ENCODE measurements at regions of chr2 and their contacts with region 1.

Region 1: DNA sequence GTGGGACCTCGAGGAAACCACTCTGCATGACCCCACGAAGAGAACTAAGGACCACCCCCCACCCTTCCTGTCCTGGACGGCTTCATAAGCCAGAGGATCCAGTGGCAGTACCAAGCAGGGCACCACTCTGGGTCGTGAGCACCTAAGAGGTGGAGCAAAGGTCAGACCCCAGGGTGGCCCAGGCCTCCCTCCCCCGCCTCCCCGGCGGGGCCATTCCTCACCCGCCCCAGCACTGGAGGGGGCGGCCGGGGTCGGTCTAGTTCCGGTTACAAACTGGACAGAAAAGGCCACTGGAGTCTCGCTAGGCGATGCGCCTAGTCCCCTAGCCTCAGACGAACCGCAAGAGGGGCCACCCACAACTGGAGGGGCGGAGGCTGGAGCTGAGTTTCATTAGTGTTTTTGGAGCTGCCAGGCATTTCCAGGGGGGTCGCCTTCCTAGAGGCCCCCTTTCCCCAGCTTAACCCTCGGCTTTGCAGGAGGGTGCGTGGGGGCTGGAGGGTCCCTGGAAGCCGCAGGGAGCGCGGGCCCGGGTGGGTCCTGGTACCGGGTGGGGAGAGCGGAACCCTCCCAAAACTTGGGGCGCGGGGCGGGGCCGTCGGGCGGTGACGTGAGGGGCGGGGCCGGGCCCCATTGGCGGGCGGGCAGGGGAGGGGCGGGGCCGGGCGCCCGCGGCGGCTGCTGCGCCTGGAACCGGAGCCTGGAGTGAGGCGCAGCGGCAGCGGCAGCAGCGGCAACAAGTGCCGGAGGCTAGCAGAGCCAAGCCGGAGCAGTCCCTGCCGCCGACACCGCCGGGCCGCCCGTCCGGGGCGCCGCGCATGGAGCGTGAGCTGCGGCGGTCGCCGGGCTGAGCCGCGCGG is at the start of gene B3GNT2:
- DNase-seq: peak; percentile 79 to 92 (median 84)
- ATAC-seq: peak; percentile 75
- H3K4me3 ChIP-seq: peak within 1 kb of the TSS; percentile 93 to 99
- H3K4me3 Mint-ChIP-seq: peak within 1 kb of the TSS; percentile 91
- H3K27ac ChIP-seq: peak within 1 kb of the TSS; percentile 86 to 90
- H3K27ac Mint-ChIP-seq: peak within 1 kb of the TSS; percentile 91
- H3K4me1 ChIP-seq: peaks cover 40% of the 10 kb centered on the region
- H3K4me1 Mint-ChIP-seq: peaks cover 32% of the 10 kb centered on the region
- H3K27me3 ChIP-seq: no peaks in the 10 kb centered on the region
- H3K27me3 Mint-ChIP-seq: no peaks in the 10 kb centered on the region
- CTCF ChIP-seq: no peak
- total RNA-seq, gene B3GNT2: 74.1 to 77.9 TPM

Region 2: DNA sequence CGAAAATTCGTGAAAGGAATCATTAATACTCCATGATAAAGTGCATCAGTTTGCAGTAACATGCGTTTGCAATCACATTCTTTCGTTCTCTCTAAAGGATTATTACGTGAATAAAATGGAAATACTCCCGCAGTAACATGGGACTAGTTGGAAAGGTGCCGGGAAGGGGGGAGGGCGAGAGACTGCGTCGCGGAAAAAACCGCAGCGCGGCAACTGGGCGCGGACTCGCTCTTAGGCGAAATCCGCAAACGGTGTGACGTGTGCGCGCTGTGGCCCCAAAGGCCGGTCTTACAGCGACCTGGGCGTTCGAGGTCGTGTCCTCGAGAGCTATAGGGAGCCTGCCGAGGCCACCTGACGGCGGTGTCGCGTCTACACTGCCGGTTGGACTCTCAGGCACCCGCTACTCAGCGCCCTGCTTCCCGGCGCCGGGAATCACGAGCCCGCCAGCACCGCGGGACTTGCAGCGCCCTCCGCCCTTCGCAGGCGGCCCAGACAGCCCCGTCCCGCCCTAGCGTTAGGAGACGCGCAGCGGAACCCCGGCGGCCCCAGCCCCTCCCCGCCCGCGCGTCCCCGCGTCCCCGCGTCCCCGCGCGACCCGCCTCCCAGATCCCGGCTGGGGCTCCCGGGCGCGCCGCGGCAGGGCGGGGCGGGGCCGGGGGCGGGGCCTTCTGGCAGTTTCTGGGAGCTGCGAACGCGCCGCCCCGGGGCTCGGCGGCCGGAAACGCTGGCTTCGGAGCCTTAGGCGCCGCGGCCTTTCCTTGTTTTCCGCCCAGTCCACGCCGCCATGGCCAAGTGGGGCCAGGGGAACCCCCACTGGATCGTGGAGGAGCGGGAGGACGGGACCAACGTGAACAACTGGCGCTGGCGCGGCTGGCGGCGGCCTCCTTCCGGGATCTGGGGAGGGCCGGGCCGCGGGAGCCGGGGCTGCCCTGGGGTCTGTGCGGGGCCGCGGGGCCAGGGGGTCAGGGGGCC is 1018.6 kb before region 1 on chr2:
- CTCF ChIA-PET with region 1: no interaction called
- POLR2A ChIA-PET with region 1: no interaction called
- intact Hi-C with region 1: loop called (anchors 10 kb)
- DNase-seq: peak; percentile 88 to 95 (median 94)
- ATAC-seq: peak; percentile 88
- H3K4me3 ChIP-seq: peak overlapping the region; percentile 74 to 87
- H3K4me3 Mint-ChIP-seq: peak overlapping the region; percentile 94
- H3K27ac ChIP-seq: peak overlapping the region; percentile 80 to 95
- H3K27ac Mint-ChIP-seq: peak overlapping the region; percentile 95
- H3K4me1 ChIP-seq: peaks cover 45% of the 10 kb centered on the region
- H3K4me1 Mint-ChIP-seq: peaks cover 52% of the 10 kb centered on the region
- H3K27me3 ChIP-seq: no peaks in the 10 kb centered on the region
- H3K27me3 Mint-ChIP-seq: no peaks in the 10 kb centered on the region
- CTCF ChIP-seq: no peak

Region 3: GRCh38 chr2:61764035-61764800 is 431.4 kb before region 1 on chr2:
- CTCF ChIA-PET with region 1: no interaction called
- POLR2A ChIA-PET with region 1: no interaction called
- intact Hi-C with region 1: loop called in 1 of 2 experiments (anchors 10 kb)
- DNase-seq: peak; percentile 91 to 99 (median 94)
- ATAC-seq: peak; percentile 97
- H3K4me3 ChIP-seq: peak overlapping the region; percentile 90 to 91
- H3K4me3 Mint-ChIP-seq: peak overlapping the region; percentile 96
- H3K27ac ChIP-seq: peak overlapping the region; percentile 99 to 100
- H3K27ac Mint-ChIP-seq: peak overlapping the region; percentile 98
- H3K4me1 ChIP-seq: no peaks in the 10 kb centered on the region
- H3K4me1 Mint-ChIP-seq: peaks cover 12% of the 10 kb centered on the region
- H3K27me3 ChIP-seq: no peaks in the 10 kb centered on the region
- H3K27me3 Mint-ChIP-seq: no peaks in the 10 kb centered on the region
- CTCF ChIP-seq: no peak

Region 4: DNA sequence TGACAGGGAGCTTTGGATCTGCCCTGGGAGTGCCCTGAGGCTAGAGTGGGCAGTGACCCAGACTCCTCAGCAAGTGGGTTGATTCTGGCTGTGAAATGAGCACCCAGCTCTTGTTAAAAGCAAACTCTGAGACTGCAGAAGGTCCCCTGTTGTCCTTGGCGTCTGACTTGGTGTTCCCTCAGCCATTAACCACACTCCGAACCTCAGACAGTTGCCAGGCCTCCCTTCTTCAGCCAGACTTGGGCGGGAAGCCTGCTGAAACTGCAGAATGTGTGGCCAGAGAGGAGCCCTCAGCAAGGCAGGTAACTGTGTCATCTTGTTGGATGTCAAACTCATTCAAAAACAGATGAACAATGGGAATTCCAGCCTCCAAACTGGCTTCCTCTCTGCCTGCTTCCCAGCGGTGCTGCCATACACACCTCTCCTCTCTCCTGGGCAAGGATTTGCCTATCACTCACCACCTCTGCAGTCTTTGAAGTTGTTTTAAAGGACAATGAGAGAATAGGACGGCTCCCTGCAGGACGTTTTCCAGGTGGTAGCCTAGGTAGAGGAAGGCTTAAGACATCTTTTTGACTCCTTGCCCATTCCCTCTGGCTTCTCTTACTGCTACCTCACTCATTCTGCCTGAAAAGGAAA is 38.7 kb before region 1 on chr2:
- CTCF ChIA-PET with region 1: no interaction called
- POLR2A ChIA-PET with region 1: no interaction called
- intact Hi-C with region 1: no loop called
- DNase-seq: no peak
- ATAC-seq: no peak
- H3K4me3 ChIP-seq: no peak overlapping the region
- H3K4me3 Mint-ChIP-seq: no peak overlapping the region
- H3K27ac ChIP-seq: no peak overlapping the region
- H3K27ac Mint-ChIP-seq: no peak overlapping the region
- H3K4me1 ChIP-seq: no peaks in the 10 kb centered on the region
- H3K4me1 Mint-ChIP-seq: no peaks in the 10 kb centered on the region
- H3K27me3 ChIP-seq: no peaks in the 10 kb centered on the region
- H3K27me3 Mint-ChIP-seq: no peaks in the 10 kb centered on the region
- CTCF ChIP-seq: no peak

Region 5: DNA sequence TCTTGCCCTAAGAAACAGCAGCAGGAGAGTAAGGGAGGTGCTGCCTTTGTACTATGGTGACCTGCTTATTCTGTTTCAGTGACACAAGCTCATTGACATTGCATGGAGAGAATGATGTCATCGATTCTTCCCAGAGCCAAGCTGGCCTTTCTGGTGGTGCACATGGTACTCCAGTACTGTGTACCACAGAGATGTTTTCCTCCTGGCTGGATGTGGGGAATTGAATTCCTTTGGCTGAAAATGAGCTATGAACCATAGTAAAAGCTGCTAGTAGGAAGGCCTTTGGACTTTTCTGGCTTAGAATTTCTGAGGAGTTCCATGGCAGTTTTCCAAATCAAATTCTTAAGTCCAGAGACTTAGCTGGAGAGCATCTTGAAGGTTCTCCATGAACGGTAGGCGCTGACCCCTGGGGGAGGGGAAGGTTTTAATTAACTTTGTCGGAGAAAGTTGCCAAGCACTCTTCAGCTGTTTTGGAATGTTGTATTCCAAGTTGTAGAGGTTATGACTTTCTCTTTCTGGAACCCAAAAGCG is 16.8 kb before region 1 on chr2:
- CTCF ChIA-PET with region 1: no interaction called
- POLR2A ChIA-PET with region 1: no interaction called
- intact Hi-C with region 1: loop called in 1 of 2 experiments (anchors 1 kb)
- DNase-seq: no peak
- ATAC-seq: no peak
- H3K4me3 ChIP-seq: no peak overlapping the region
- H3K4me3 Mint-ChIP-seq: no peak overlapping the region
- H3K27ac ChIP-seq: no peak overlapping the region
- H3K27ac Mint-ChIP-seq: no peak overlapping the region
- H3K4me1 ChIP-seq: no peaks in the 10 kb centered on the region
- H3K4me1 Mint-ChIP-seq: peaks cover 10% of the 10 kb centered on the region
- H3K27me3 ChIP-seq: no peaks in the 10 kb centered on the region
- H3K27me3 Mint-ChIP-seq: no peaks in the 10 kb centered on the region
- CTCF ChIP-seq: no peak

Region 6: DNA sequence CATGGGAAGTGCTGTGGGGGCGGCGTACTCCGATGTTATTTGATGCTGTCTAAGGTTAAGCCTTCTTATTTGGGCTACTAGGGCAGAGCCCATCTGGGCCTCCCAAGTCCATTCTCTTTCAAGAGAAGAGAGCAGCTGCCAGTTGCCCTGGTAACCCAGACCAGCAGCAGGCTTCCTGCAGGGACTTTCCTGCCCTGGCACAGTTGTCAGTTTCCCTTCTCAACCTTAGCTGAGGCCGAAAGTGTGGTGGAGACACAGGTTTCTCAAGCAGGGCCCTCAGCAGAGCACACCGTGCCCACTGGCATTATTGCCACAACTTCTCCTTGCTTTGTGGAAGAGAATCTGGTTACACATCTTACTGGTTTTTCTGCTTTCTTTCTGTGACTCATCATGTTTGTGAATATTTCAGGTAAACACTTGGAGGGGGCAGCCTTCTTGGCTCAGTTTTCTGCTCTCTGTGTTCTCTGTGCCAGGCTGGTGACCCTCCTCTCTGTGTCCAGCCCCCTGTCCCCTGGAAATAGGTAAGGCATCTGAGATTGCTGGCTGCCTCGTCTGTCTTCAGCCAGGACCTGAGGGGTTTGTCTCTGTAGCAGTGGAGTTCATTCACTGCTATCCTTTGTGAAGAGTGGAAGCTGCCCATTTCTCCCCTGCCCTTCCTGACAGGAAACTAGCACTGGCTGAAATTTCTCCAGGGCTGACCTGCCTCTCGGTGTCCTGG is 111.3 kb after region 1 on chr2:
- CTCF ChIA-PET with region 1: interaction called, 4 read pairs
- POLR2A ChIA-PET with region 1: interaction called, 7 read pairs
- intact Hi-C with region 1: loop called (anchors 2 kb)
- DNase-seq: peak in 6 of 9 experiments; percentile 17 to 85 (median 38)
- ATAC-seq: peak; percentile 14
- H3K4me3 ChIP-seq: no peak overlapping the region
- H3K4me3 Mint-ChIP-seq: peak overlapping the region; percentile 13
- H3K27ac ChIP-seq: peak overlapping the region in 1 of 2 experiments; percentile 73
- H3K27ac Mint-ChIP-seq: peak overlapping the region; percentile 82
- H3K4me1 ChIP-seq: peaks cover 89% of the 10 kb centered on the region
- H3K4me1 Mint-ChIP-seq: peaks cover 93% of the 10 kb centered on the region
- H3K27me3 ChIP-seq: no peaks in the 10 kb centered on the region
- H3K27me3 Mint-ChIP-seq: no peaks in the 10 kb centered on the region
- CTCF ChIP-seq: no peak

Region 7: GRCh38 chr2:62443886-62444285 is 248.2 kb after region 1 on chr2:
- CTCF ChIA-PET with region 1: no interaction called
- POLR2A ChIA-PET with region 1: no interaction called
- intact Hi-C with region 1: no loop called
- DNase-seq: no peak
- ATAC-seq: no peak
- H3K4me3 ChIP-seq: no peak overlapping the region
- H3K4me3 Mint-ChIP-seq: no peak overlapping the region
- H3K27ac ChIP-seq: no peak overlapping the region
- H3K27ac Mint-ChIP-seq: no peak overlapping the region
- H3K4me1 ChIP-seq: no peaks in the 10 kb centered on the region
- H3K4me1 Mint-ChIP-seq: no peaks in the 10 kb centered on the region
- H3K27me3 ChIP-seq: no peaks in the 10 kb centered on the region
- H3K27me3 Mint-ChIP-seq: no peaks in the 10 kb centered on the region
- CTCF ChIP-seq: no peak

Region 8: GRCh38 chr2:63588385-63589147 is 1392.9 kb after region 1 on chr2 and contains the starts of genes MDH1 and WDPCP:
- CTCF ChIA-PET with region 1: no interaction called
- POLR2A ChIA-PET with region 1: no interaction called
- intact Hi-C with region 1: loop called (anchors 5 kb)
- DNase-seq: peak; percentile 84 to 99 (median 91)
- ATAC-seq: peak; percentile 83
- H3K4me3 ChIP-seq: peak within 1 kb of the TSS; percentile 83 to 88
- H3K4me3 Mint-ChIP-seq: peak within 1 kb of the TSS; percentile 90
- H3K27ac ChIP-seq: peak within 1 kb of the TSS; percentile 75 to 95
- H3K27ac Mint-ChIP-seq: peak within 1 kb of the TSS; percentile 95
- H3K4me1 ChIP-seq: peaks cover 19% of the 10 kb centered on the region
- H3K4me1 Mint-ChIP-seq: peaks cover 44% of the 10 kb centered on the region
- H3K27me3 ChIP-seq: no peaks in the 10 kb centered on the region
- H3K27me3 Mint-ChIP-seq: no peaks in the 10 kb centered on the region
- CTCF ChIP-seq: no peak
- total RNA-seq, gene MDH1: 87.2 to 94.8 TPM
- total RNA-seq, gene WDPCP: 9.6 to 11.9 TPM

Measured in CD8-positive, alpha-beta T cell (primary cell).